Activated T-helper 2 cell treated with anti-CD3 and anti-CD28 coated beads, Interferon-gamma antibody, Interleukin-2, Interleukin-4, amounts not matched to agents 10 μg/mL and 5 μg/mL and 100 μg/mL, durations not matched to agents 14 hours and 24 hours and 36 hours (primary cell): ENCODE measurements at regions of chr4 and their contacts with region 1.

Region 1: DNA sequence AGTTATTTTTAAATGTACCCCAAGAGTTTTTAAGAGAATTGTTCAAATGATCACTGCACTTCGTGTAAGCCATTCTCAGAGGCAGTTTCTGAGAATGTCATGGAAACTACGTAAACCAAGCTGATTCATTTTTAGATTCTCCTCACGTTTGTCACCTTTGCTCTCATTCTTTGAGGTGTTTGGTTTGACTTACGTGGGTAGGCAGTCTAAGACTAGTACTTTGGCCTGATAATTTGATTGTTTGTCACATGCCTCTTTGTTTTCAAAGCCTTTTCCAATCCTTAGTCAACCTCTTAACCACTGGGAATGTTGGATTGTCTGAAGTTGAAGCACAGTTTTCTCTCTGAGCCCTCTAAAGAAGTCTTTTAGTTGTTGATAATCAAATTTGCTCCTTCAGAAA is 10.5 kb downstream of the SEPTIN11 start:
- DNase-seq: no peak
- H3K4me3 Mint-ChIP-seq: no peak overlapping the region
- H3K27ac Mint-ChIP-seq: no peak overlapping the region
- H3K4me1 Mint-ChIP-seq: peaks cover 11% of the 10 kb centered on the region
- H3K27me3 Mint-ChIP-seq: peaks cover 73% of the 10 kb centered on the region

Region 2: GRCh38 chr4:77022560-77023179 is 62.7 kb after region 1 on chr4:
- intact Hi-C with region 1: loop called (anchors 1 kb)
- DNase-seq: no peak
- H3K4me3 Mint-ChIP-seq: no peak overlapping the region
- H3K27ac Mint-ChIP-seq: no peak overlapping the region
- H3K4me1 Mint-ChIP-seq: peaks cover 23% of the 10 kb centered on the region
- H3K27me3 Mint-ChIP-seq: peaks cover 43% of the 10 kb centered on the region

Region 3: GRCh38 chr4:77095101-77095821 is 135.2 kb after region 1 on chr4:
- intact Hi-C with region 1: no loop called
- DNase-seq: peak; percentile 55
- H3K4me3 Mint-ChIP-seq: no peak overlapping the region
- H3K27ac Mint-ChIP-seq: no peak overlapping the region
- H3K4me1 Mint-ChIP-seq: peaks cover 25% of the 10 kb centered on the region
- H3K27me3 Mint-ChIP-seq: peaks cover 6% of the 10 kb centered on the region